ENCODE measurements at regions of chr17 and their contacts with region 1.

Region 1: DNA sequence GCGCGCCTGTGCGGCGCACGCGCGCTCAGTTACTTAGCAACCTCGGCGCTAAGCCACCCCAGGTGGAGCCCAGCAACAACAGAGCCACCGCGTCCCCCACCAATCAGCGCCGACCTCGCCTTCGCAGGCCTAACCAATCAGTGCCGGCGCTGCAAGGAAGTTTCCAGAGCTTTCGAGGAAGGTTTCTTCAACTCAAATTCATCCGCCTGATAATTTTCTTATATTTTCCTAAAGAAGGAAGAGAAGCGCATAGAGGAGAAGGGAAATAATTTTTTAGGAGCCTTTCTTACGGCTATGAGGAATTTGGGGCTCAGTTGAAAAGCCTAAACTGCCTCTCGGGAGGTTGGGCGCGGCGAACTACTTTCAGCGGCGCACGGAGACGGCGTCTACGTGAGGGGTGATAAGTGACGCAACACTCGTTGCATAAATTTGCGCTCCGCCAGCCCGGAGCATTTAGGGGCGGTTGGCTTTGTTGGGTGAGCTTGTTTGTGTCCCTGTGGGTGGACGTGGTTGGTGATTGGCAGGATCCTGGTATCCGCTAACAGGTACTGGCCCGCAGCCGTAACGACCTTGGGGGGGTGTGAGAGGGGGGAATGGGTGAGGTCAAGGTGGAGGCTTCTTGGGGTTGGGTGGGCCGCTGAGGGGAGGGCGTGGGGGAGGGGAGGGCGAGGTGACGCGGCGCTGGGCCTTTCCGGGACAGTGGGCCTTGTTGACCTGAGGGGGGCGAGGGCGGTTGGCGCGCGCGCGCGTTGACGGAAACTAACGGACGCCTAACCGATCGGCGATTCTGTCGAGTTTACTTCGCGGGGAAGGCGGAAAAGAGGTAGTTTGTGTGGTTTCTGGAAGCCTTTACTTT is at the start of gene UBB:
- DNase-seq: peak; percentile 93 to 98
- H3K4me3 ChIP-seq: peak within 1 kb of the TSS; percentile 85 to 95 (median 92)
- H3K27ac ChIP-seq: peak within 1 kb of the TSS; percentile 97
- H3K4me1 ChIP-seq: peaks cover 0 to 2% (median 0%) of the 10 kb centered on the region in 4 experiments; a peak in 4 of 7 replicates
- H3K27me3 ChIP-seq: no peaks in the 10 kb centered on the region
- CTCF ChIP-seq: peak in 1 of 3 experiments; percentile 14; a peak in 1 of 4 replicates
- EP300 ChIP-seq: peak; percentile 19 to 22; a peak in 2 of 3 replicates
- POLR2A ChIP-seq: peak; percentile 96 to 99
- RAD21 ChIP-seq: no peak; a peak in 1 of 4 replicates
- total RNA-seq, gene UBB: 1,585 and 1,597 TPM in 2 replicates

Region 2: GRCh38 chr17:16407911-16408588 is 27.2 kb after region 1 on chr17:
- CTCF ChIA-PET with region 1: interaction called, 7 read pairs
- POLR2A ChIA-PET with region 1: interaction called, 40 read pairs
- DNase-seq: peak in 1 of 2 experiments; percentile 69
- H3K4me3 ChIP-seq: peak overlapping the region in 2 of 4 experiments; percentile 23 to 52; a peak in 4 of 8 replicates
- H3K27ac ChIP-seq: peak overlapping the region; percentile 68
- H3K4me1 ChIP-seq: peaks cover 4 to 7% (median 4%) of the 10 kb centered on the region in 4 experiments; a peak in 4 of 7 replicates
- H3K27me3 ChIP-seq: no peaks in the 10 kb centered on the region
- CTCF ChIP-seq: no peak
- EP300 ChIP-seq: no peak
- POLR2A ChIP-seq: no peak
- RAD21 ChIP-seq: no peak

Region 3: DNA sequence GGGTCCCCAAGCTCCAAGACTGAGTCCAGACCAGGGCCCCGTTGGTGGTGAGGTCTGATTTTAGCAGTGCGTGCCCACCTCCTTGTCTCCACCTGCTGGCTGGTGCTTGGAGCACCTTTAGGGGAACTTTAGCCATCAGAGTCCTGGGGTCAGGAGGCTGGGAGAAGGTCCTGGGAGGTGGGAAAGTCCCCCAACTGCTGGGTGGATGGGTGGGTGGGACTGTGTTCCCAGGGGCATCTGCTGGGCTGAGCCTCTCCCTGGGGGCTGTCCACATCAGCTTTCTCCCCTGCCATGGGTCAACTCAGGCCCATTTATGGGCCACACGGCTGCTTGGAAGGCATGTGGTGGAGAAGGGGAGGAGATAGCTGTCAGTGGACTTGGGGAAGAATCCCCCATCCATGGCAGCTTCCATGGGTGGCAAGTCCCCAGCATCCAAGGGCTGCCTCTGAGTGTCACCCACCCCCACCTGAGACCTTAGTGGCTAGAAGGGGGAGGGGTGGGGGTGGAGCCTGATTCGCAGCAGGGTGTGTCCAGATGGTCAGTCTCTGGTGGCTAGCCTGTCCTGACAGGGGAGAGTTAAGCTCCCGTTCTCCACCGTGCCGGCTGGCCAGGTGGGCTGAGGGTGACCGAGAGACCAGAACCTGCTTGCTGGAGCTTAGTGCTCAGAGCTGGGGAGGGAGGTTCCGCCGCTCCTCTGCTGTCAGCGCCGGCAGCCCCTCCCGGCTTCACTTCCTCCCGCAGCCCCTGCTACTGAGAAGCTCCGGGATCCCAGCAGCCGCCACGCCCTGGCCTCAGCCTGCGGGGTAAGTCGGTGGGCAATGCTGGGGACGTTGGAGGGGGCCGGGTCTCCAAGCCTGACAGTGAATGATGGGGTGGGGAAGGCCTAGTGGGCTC is 34.4 kb after region 1 on chr17 and contains the start of gene TRPV2:
- CTCF ChIA-PET with region 1: interaction called, 6 read pairs
- POLR2A ChIA-PET with region 1: interaction called, 10 read pairs
- DNase-seq: peak in 1 of 2 experiments; percentile 73
- H3K4me3 ChIP-seq: no peak within 1 kb of the TSS
- H3K27ac ChIP-seq: no peak within 1 kb of the TSS
- H3K4me1 ChIP-seq: peaks cover 0 to 12% (median 5%) of the 10 kb centered on the region in 4 experiments; a peak in 6 of 7 replicates
- H3K27me3 ChIP-seq: no peaks in the 10 kb centered on the region
- CTCF ChIP-seq: peak; percentile 81 to 84 (median 82)
- EP300 ChIP-seq: no peak
- POLR2A ChIP-seq: no peak
- RAD21 ChIP-seq: peak; percentile 68 to 75
- total RNA-seq, gene TRPV2: 1.6 and 2.1 TPM in 2 replicates

Region 4: GRCh38 chr17:16428098-16428882 is 47.4 kb after region 1 on chr17:
- CTCF ChIA-PET with region 1: interaction called, 4 read pairs
- POLR2A ChIA-PET with region 1: interaction called, 13 read pairs
- DNase-seq: peak in 1 of 2 experiments; percentile 44
- H3K4me3 ChIP-seq: no peak overlapping the region
- H3K27ac ChIP-seq: no peak overlapping the region
- H3K4me1 ChIP-seq: no peaks in the 10 kb centered on the region
- H3K27me3 ChIP-seq: no peaks in the 10 kb centered on the region; a peak in 1 of 7 replicates
- CTCF ChIP-seq: peak; percentile 62 to 82 (median 81)
- EP300 ChIP-seq: no peak
- POLR2A ChIP-seq: no peak
- RAD21 ChIP-seq: peak; percentile 40 to 52

Measured in H1 (cell line).